Esophagus squamous epithelium (tissue), 5 donors: ENCODE measurements at regions of chr2 and their contacts with region 1.

Region 1: DNA sequence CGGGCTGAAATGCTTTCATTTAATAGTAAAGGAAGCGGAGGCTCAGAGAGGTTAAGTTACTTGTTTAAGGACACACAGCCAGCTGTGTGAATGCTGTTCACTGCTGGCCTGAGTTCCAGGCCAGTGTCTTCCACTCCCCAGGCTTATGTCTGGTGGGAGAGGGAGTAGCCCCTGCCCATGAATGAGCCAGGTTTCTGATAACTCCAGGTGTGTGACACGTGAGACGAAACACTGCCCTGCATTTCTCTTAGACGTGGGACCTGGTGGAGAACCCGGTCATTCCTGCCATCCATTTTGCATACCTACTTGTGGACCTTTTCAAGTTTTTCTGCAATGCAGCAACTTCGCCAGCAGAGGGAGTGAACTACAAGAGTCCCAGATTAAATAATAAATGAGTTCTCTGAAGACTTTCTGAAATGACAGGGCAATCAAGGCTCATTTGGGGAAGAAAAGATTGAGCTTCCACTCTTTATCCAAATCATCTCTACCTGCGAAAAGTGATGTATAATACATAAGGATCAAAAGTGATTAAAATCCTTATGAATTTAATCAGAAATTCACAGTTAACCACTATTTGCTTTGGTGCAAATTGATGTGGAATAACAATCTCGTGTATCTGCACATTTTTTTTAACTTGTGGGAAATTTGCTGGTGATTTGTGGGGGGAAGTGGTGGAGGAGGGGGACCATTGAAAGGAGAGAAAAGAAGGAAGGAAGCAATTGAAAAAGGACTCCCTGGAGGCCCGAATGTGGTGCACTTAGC is 79.4 kb upstream of the ASB18 start:
- DNase-seq: no peak
- H3K4me3 ChIP-seq: no peak overlapping the region
- H3K27ac ChIP-seq: no peak overlapping the region
- H3K4me1 ChIP-seq: peaks cover 0 to 5% (median 0%) of the 10 kb centered on the region in 3 donors
- H3K27me3 ChIP-seq: no peaks in the 10 kb centered on the region
- CTCF ChIP-seq: peak; percentile 59 to 84 (median 76)
- POLR2A ChIP-seq: no peak

Region 2: DNA sequence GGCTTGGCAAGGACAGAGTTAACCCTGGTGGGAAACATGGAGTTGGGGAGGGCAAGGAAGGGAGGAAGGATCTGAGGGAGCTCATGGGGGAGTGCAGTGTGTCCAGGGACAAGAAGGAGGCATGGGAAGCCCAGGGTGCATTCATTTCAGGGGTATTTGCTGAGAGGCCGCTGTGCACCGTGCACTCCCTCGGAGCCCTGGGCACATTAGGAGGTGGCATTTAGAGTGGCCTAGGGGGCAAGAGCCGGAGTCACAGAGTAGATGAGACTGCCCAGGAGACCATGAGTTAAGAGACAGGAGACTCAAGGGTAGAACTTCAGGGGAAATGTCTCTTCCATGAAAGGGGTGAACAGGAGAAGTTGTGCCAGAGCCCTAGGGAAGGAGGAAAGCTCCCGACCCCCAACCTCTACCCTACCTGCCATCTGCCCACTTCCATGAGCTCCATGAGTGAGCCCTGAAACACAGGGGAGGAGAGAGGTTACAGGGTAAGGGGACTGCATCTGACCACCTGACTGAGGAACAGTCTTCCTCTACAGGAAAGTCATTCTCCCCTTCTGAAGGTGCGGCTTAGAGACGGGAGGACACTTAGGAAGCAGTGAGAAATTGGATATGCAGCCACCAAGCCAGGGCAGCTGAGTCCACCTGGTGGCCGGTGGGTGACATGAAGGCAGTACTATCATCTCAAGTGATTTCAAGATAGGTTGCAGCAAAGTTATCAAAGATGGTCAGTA is 683.6 kb after region 1 on chr2:
- intact Hi-C with region 1: loop called (anchors 10 kb)
- DNase-seq: no peak
- H3K4me3 ChIP-seq: no peak overlapping the region
- H3K27ac ChIP-seq: no peak overlapping the region
- H3K4me1 ChIP-seq: peaks cover 0 to 7% (median 0%) of the 10 kb centered on the region in 3 donors
- H3K27me3 ChIP-seq: no peaks in the 10 kb centered on the region
- CTCF ChIP-seq: peak; percentile 51 to 97 (median 85)
- POLR2A ChIP-seq: no peak

Region 3: DNA sequence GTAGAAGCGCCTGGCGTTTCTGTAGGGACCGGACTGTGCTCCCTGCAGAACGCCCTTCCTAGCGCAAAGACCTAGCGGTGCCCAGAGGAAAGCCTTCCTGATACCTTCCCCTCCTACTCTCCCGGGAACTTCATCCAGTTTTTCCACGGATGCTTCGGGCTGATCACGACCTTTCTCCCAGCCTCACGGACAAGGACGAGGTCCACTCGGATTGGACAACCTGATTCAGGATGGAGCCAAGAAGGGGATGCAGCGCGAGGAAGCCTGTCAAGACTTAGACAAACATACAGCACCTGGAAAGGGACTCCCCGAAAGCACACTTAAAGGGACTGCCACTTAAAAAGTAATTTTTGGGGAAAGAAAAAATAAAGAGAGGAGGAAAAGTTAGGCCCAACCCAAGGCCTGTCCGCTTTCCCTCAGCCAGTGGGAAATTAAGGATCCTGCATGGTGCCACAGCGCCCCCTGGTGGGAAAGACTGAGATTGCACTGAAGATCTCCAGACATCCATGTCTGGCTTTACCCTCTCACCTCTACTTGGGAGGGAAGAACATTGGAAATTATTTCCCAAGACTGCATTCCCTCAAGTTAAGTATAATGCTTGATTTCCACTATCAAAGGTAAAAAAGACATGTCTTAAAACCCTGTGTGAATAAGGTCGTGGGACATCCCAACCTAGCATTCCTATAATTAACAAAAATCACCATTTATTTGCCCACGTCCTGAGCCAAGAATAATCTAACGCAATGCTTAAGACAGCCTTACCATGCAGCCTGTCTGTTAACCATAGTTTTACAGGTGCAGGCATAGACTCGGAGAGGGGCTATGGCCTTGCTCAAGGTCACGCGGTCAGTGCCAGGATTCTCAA is 728.7 kb after region 1 on chr2:
- intact Hi-C with region 1: loop called (anchors 5 kb)
- DNase-seq: no peak
- H3K4me3 ChIP-seq: no peak overlapping the region
- H3K27ac ChIP-seq: no peak overlapping the region
- H3K4me1 ChIP-seq: peaks cover 0 to 4% (median 0%) of the 10 kb centered on the region in 3 donors
- H3K27me3 ChIP-seq: no peaks in the 10 kb centered on the region
- CTCF ChIP-seq: peak; percentile 89 to 99 (median 92)
- POLR2A ChIP-seq: no peak